ENCODE measurements at regions of chr3 and their contacts with region 1.

Region 1: DNA sequence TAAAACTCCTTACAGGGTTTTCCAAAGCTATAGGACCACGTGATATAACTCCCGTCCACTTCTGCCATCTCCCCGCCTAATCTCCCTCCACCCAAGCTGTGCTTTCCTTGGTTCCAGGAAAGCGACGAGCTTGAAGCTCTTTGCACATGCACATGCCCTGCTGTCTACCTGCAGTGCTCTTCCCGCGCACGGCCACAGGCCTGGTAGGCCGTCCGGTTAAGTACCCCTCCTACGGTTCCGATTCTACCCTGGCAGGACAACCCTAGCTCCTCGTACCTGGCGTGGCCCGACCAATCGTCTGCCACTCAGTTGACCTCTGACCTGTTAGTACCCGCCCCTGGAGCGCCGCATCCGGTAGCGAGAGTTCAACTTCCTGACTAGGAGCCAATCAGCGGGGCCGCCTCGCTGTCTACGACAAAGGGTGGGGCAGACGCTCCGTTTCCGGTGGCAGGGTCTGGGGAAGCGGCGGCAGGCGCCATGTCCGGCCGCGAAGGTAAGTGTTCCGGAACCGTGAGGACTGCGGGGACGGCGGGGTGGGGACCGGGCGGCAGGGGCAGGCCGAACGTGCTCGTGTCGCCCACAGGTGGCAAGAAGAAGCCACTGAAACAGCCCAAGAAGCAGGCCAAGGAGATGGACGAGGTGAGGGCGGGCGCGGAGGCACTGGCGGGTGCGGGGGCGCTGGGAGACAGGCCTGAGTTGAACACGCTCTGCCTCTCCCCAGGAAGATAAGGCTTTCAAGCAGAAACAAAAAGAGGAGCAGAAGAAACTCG is at the starts of genes CCDC51 and TMA7:
- DNase-seq: peak; percentile 95 to 99 (median 98)
- ATAC-seq: peak; percentile 91
- H3K4me3 ChIP-seq: peak within 1 kb of the TSS; percentile 82 to 86
- H3K4me3 Mint-ChIP-seq: peak within 1 kb of the TSS; percentile 89
- H3K27ac ChIP-seq: peak within 1 kb of the TSS; percentile 95 to 98
- H3K27ac Mint-ChIP-seq: peak within 1 kb of the TSS; percentile 97
- H3K4me1 ChIP-seq: peaks cover 21% of the 10 kb centered on the region
- H3K4me1 Mint-ChIP-seq: peaks cover 37% of the 10 kb centered on the region
- H3K27me3 ChIP-seq: no peaks in the 10 kb centered on the region
- H3K27me3 Mint-ChIP-seq: no peaks in the 10 kb centered on the region
- CTCF ChIP-seq: no peak
- total RNA-seq, gene CCDC51: 2.9 to 4.7 TPM
- total RNA-seq, gene TMA7: 279 to 297 TPM

Region 2: GRCh38 chr3:47282424-47283192 is 1157.4 kb before region 1 on chr3 and contains the starts of genes KIF9 and KLHL18:
- CTCF ChIA-PET with region 1: no interaction called
- POLR2A ChIA-PET with region 1: no interaction called
- intact Hi-C with region 1: loop called (anchors 5 to 10 kb)
- DNase-seq: peak; percentile 92 to 99 (median 96)
- ATAC-seq: peak; percentile 86
- H3K4me3 ChIP-seq: peak within 1 kb of the TSS; percentile 75 to 79
- H3K4me3 Mint-ChIP-seq: peak within 1 kb of the TSS; percentile 97
- H3K27ac ChIP-seq: peak within 1 kb of the TSS; percentile 98 to 99
- H3K27ac Mint-ChIP-seq: peak within 1 kb of the TSS; percentile 99
- H3K4me1 ChIP-seq: peaks cover 32% of the 10 kb centered on the region
- H3K4me1 Mint-ChIP-seq: peaks cover 40% of the 10 kb centered on the region
- H3K27me3 ChIP-seq: no peaks in the 10 kb centered on the region
- H3K27me3 Mint-ChIP-seq: no peaks in the 10 kb centered on the region
- CTCF ChIP-seq: no peak
- total RNA-seq, gene KIF9: 11.7 to 12.2 TPM
- total RNA-seq, gene KLHL18: 61.6 to 62.8 TPM

Region 3: GRCh38 chr3:48273594-48274211 is 166.3 kb before region 1 on chr3:
- CTCF ChIA-PET with region 1: interaction called, 182 read pairs
- POLR2A ChIA-PET with region 1: interaction called, 4 read pairs
- intact Hi-C with region 1: loop called (anchors 1 kb)
- DNase-seq: peak in 8 of 9 experiments; percentile 5 to 78 (median 58)
- ATAC-seq: peak; percentile 50
- H3K4me3 ChIP-seq: no peak overlapping the region
- H3K4me3 Mint-ChIP-seq: no peak overlapping the region
- H3K27ac ChIP-seq: no peak overlapping the region
- H3K27ac Mint-ChIP-seq: no peak overlapping the region
- H3K4me1 ChIP-seq: peaks cover 7% of the 10 kb centered on the region
- H3K4me1 Mint-ChIP-seq: peaks cover 20% of the 10 kb centered on the region
- H3K27me3 ChIP-seq: no peaks in the 10 kb centered on the region
- H3K27me3 Mint-ChIP-seq: no peaks in the 10 kb centered on the region
- CTCF ChIP-seq: peak; percentile 75

Region 4: GRCh38 chr3:48459773-48460516 is 19.9 kb after region 1 on chr3:
- CTCF ChIA-PET with region 1: interaction called, 41 read pairs
- POLR2A ChIA-PET with region 1: interaction called, 3 read pairs
- intact Hi-C with region 1: no loop called
- DNase-seq: no peak
- ATAC-seq: no peak
- H3K4me3 ChIP-seq: no peak overlapping the region
- H3K4me3 Mint-ChIP-seq: no peak overlapping the region
- H3K27ac ChIP-seq: no peak overlapping the region
- H3K27ac Mint-ChIP-seq: no peak overlapping the region
- H3K4me1 ChIP-seq: peaks cover 5% of the 10 kb centered on the region
- H3K4me1 Mint-ChIP-seq: peaks cover 4% of the 10 kb centered on the region
- H3K27me3 ChIP-seq: no peaks in the 10 kb centered on the region
- H3K27me3 Mint-ChIP-seq: no peaks in the 10 kb centered on the region
- CTCF ChIP-seq: no peak

Region 5: DNA sequence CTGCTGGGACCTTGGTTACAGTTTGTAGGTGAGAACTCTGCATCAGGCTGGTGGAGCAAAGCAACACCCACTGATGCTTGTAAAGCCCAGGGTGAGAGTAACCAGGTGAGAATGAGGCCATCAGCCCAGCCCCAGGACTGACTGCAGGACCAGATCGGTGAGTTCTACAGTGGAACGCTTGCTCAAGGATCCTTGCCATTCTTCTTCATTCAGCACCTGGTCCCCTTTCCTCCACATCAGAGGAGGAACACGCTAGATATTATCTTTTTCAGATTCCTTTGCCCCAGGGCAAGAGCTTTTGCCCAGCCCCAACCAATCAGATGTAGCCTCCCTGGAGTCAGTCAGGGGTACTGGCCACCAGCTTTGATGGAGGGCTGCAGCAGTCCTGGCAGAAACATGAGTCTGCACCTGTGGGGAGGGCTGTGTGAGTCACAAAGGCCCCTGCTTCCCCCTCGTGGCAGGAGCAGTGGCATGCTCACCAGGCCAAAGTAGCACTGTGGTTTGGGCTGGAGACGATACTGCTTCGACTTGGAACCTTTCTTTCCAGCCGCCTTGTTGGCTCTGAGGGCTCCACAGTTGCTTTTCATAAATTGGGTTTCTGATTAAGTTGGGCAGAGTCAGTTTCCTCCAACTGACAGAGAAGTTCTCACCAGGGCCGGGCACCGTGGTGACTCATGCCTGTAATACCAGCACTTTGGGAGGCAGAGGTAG is 67.5 kb after region 1 on chr3:
- CTCF ChIA-PET with region 1: interaction called, 156 read pairs
- POLR2A ChIA-PET with region 1: interaction called, 7 read pairs
- intact Hi-C with region 1: loop called (anchors 1 kb)
- DNase-seq: peak; percentile 53 to 88 (median 80)
- ATAC-seq: peak; percentile 87
- H3K4me3 ChIP-seq: no peak overlapping the region
- H3K4me3 Mint-ChIP-seq: peak overlapping the region; percentile 47
- H3K27ac ChIP-seq: peak overlapping the region in 1 of 2 experiments; percentile 25
- H3K27ac Mint-ChIP-seq: peak overlapping the region; percentile 72
- H3K4me1 ChIP-seq: peaks cover 36% of the 10 kb centered on the region
- H3K4me1 Mint-ChIP-seq: peaks cover 37% of the 10 kb centered on the region
- H3K27me3 ChIP-seq: no peaks in the 10 kb centered on the region
- H3K27me3 Mint-ChIP-seq: no peaks in the 10 kb centered on the region
- CTCF ChIP-seq: peak; percentile 72

Region 6: DNA sequence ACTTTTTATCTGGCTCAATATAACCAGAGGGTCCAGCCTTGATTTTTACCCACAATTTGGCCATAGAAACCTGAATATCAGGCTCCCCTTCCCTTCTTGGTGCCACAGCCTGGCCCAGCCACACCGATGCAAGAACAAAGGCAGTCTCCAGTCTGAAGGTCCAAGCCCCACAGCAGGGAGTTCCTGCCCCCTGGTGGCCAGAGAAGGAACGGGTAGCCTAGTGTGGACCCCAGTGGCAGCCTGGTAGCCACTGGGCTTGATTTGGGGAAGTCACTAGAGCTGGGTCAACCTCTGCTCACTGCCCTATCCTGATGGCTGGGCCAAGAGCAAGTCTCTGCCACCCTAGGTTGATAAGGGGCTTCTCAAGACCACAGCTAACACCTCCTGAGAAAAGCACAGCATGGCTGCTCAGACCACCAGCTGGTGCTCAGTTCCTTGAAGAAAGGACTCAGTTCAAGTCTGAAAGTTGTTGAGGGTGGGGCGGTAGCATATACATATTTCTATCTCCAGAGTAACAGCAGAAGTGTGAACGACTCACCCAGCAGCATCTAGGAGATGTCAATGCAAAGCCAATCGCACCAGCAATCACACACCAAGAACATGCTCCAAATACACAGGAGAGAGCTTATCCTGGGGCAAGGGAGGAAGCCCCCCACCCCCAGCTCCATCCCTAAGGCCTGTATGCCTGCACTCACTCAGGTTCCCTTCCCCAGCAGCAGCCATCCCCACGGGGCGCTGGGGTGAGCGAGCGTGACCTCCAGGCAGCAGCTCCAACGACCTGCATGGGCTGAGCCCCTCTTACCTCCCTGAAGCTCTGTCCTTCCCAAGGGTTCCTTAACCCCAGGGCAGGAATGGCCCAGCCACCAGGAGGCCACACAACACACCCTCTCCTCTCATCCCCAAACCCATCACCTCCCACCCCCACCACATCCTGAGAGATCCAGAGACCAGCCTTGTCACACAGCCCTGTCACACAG is 109.0 kb after region 1 on chr3:
- CTCF ChIA-PET with region 1: interaction called, 142 read pairs
- POLR2A ChIA-PET with region 1: interaction called, 3 read pairs
- intact Hi-C with region 1: loop called (anchors 1 kb)
- DNase-seq: peak; percentile 66 to 92 (median 82)
- ATAC-seq: peak; percentile 100
- H3K4me3 ChIP-seq: no peak overlapping the region
- H3K4me3 Mint-ChIP-seq: no peak overlapping the region
- H3K27ac ChIP-seq: no peak overlapping the region
- H3K27ac Mint-ChIP-seq: no peak overlapping the region
- H3K4me1 ChIP-seq: no peaks in the 10 kb centered on the region
- H3K4me1 Mint-ChIP-seq: peaks cover 8% of the 10 kb centered on the region
- H3K27me3 ChIP-seq: no peaks in the 10 kb centered on the region
- H3K27me3 Mint-ChIP-seq: no peaks in the 10 kb centered on the region
- CTCF ChIP-seq: peak; percentile 78